Tibial artery (tissue), 4 donors: ENCODE measurements at regions of chr5 and their contacts with region 1.

Region 1: DNA sequence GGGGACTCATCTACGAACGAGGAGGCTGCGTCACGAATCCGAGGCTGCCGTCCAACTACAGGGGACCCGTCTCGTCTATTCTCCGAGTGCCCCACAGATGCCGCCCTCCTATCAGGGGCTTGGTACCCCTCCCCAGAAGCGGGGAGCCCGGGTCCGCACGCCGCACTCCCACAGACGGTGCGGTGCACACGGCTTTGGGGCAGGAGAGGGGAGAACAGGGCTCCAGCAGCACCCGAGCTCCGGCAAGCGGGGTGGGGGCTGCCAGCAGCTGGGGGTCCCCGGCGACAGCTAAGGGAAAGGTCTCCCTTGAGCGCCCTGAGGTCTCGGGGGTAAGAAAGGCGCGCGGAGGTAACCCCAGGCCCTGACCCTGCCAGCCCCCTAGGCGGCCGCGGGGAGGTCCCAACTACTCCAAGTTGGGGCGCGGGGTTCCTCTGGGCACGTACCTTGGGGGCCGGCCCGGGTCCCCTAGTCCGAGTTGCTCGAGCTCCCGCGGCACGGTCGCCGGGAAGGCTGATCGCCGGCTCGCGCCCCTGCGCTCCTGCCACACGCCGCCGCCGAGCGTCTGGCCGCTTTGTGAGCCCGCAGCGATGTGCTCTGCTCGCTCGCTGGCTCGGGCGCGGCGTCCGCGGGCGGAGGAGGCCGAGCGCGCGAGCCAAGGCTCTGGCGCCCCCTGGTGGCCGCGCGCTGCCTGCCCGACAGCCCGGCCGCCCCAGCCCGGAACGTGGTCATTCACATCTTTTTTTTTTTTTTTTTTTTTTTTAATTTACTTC is at the start of gene SPOCK1:
- DNase-seq: peak; percentile 60 to 81
- H3K4me3 ChIP-seq: peak within 1 kb of the TSS; percentile 60 to 75
- H3K27ac ChIP-seq: peak within 1 kb of the TSS; percentile 62
- H3K4me1 ChIP-seq: peaks cover 0 to 18% (median 11%) of the 10 kb centered on the region in 4 donors
- H3K27me3 ChIP-seq: peaks cover 0 to 7% of the 10 kb centered on the region in 2 donors
- CTCF ChIP-seq: peak; percentile 66 to 88

Region 2: DNA sequence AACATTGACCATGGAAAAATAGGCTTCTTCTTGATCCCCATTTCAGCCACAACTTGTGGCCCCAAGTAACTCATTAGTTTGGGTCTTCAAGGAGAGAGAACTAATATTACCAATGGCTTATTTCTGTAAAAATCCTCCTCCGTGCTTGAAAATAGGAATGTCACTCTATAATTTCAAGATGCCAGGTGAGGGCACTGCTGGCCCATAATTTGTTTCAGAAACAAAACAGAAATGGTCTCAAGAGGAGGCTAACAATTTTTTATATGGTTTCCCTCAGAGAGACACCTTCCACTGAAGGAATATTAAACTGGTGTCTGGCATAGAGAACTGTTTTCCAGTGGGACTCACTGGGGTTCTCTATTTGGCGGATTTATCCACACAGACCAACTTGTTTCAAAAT is 696.5 kb before region 1 on chr5:
- intact Hi-C with region 1: loop called (anchors 10 kb)
- DNase-seq: no peak
- H3K4me3 ChIP-seq: no peak overlapping the region
- H3K27ac ChIP-seq: no peak overlapping the region
- H3K4me1 ChIP-seq: no peaks in the 10 kb centered on the region
- H3K27me3 ChIP-seq: no peaks in the 10 kb centered on the region
- CTCF ChIP-seq: peak; percentile 15 to 34

Region 3: GRCh38 chr5:137320056-137321045 is 178.6 kb before region 1 on chr5:
- intact Hi-C with region 1: loop called (anchors 5 kb)
- DNase-seq: no peak
- H3K4me3 ChIP-seq: no peak overlapping the region
- H3K27ac ChIP-seq: no peak overlapping the region
- H3K4me1 ChIP-seq: peaks cover 0 to 26% (median 17%) of the 10 kb centered on the region in 4 donors
- H3K27me3 ChIP-seq: no peaks in the 10 kb centered on the region
- CTCF ChIP-seq: peak; percentile 84 to 85

Region 4: GRCh38 chr5:137545956-137546355 is 47.0 kb after region 1 on chr5:
- intact Hi-C with region 1: no loop called
- DNase-seq: no peak
- H3K4me3 ChIP-seq: no peak overlapping the region
- H3K27ac ChIP-seq: no peak overlapping the region
- H3K4me1 ChIP-seq: no peaks in the 10 kb centered on the region
- H3K27me3 ChIP-seq: no peaks in the 10 kb centered on the region
- CTCF ChIP-seq: no peak